ENCODE measurements at regions of chr11 and their contacts with region 1.

Region 1: DNA sequence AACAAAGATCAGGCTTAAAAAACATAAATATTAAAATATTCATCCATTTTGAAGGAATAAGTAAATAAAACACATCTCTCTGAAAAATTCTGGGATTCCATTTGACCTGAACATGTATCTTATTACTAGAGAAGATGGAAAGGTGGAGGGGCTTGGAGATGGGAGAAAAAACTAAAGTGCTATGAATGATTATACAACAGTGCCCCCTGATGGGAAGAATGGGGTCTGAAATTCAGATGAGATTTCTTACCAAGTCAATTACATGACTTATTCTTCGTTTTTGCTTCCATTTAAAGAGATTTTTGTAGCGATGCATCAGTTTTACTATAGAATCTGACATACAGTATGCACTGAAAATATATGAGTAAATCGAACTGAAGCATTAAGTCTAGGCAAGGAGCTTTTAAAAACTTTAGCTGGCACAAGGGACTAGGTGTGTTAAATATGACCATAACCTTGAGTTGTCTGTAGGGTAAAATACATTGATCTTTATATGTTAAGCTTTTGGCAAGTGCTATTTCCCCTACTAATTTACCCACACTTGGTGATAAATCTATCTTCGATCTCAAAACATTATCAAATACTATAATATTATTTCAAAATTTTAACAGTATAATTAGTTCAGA is 718.8 kb downstream of the CNTN5 start:
- DNase-seq: peak; percentile 80
- H3K4me3 ChIP-seq: no peak overlapping the region
- H3K27ac ChIP-seq: no peak overlapping the region
- H3K4me1 ChIP-seq: peaks cover 4% of the 10 kb centered on the region
- H3K27me3 ChIP-seq: no peaks in the 10 kb centered on the region
- CTCF ChIP-seq: peak; percentile 84

Region 2: DNA sequence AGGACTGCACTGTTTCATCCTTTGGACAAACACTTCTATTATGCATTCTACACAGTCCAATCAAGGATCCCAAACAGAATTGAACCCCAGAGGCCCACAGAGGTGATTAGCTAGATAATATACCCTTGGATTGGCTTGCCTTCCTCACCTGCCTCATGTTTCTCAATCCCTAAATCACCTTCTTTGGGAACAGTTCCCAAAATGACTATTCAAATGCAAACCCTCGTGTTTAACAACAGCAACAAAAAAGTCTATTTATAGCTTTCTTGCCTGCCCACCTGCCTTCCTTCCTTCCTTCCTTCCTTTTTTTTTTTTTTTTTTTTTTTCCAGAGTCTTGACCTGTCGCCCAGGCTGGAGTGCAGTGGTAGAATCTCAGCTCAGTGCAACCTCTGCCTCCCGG is 538.9 kb before region 1 on chr11:
- CTCF ChIA-PET with region 1: no interaction called
- POLR2A ChIA-PET with region 1: no interaction called
- intact Hi-C with region 1: loop called (anchors 10 kb)
- DNase-seq: no peak
- H3K4me3 ChIP-seq: no peak overlapping the region
- H3K27ac ChIP-seq: no peak overlapping the region
- H3K4me1 ChIP-seq: no peaks in the 10 kb centered on the region
- H3K27me3 ChIP-seq: no peaks in the 10 kb centered on the region
- CTCF ChIP-seq: no peak

Region 3: DNA sequence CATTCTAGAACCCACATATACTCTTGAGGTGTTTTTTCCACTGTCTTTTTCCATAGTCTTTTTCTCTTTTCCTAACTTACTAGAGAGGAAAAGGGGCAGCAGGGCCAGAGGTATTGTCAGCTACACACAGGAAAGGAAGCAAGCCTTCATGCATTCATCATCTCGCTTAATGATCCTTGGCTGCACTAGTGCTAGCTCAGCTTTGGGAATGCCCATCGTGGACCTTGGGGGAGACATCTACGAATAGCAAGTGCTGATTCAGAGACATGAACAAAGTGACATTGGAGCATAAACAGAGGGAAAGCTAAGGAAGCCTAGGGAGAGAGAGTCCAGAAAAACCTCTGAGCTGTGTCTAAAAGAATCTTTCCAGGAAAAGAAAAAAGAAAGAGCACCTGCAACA is 481.2 kb after region 1 on chr11:
- CTCF ChIA-PET with region 1: no interaction called
- POLR2A ChIA-PET with region 1: no interaction called
- intact Hi-C with region 1: no loop called
- DNase-seq: peak; percentile 31
- H3K4me3 ChIP-seq: peak overlapping the region; percentile 30
- H3K27ac ChIP-seq: peak overlapping the region; percentile 73
- H3K4me1 ChIP-seq: peaks cover 31% of the 10 kb centered on the region
- H3K27me3 ChIP-seq: no peaks in the 10 kb centered on the region
- CTCF ChIP-seq: no peak